AG04450 (cell line): ENCODE measurements at regions of chr6 and their contacts with region 1.

Region 1: DNA sequence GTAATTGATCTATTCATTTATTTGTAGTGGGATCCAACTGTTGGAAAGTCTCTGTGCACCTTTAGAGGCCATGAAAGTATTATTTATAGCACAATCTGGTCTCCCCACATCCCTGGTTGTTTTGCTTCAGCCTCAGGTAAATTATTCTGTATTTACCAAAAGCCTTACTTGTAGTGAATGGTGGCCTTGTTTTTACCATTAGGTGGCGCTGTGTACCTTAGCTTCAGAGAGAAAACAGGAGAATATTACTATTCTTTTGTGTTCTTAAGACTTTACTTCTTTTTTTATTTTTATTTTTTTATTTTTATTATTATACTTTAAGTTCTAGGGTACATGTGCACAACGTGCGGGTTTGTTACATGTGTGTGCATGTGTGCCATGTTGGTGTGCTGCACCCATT is 23.7 kb downstream of the PEX7 start:
- DNase-seq: peak; percentile 39
- H3K4me3 ChIP-seq: no peak overlapping the region
- H3K27ac ChIP-seq: no peak overlapping the region
- H3K27me3 ChIP-seq: no peaks in the 10 kb centered on the region
- CTCF ChIP-seq: peak; percentile 81

Region 2: GRCh38 chr6:136859430-136859829 is 13.4 kb after region 1 on chr6:
- CTCF ChIA-PET with region 1: interaction called, 13 read pairs
- POLR2A ChIA-PET with region 1: no interaction called
- DNase-seq: no peak
- H3K4me3 ChIP-seq: no peak overlapping the region
- H3K27ac ChIP-seq: no peak overlapping the region
- H3K27me3 ChIP-seq: no peaks in the 10 kb centered on the region
- CTCF ChIP-seq: no peak

Region 3: DNA sequence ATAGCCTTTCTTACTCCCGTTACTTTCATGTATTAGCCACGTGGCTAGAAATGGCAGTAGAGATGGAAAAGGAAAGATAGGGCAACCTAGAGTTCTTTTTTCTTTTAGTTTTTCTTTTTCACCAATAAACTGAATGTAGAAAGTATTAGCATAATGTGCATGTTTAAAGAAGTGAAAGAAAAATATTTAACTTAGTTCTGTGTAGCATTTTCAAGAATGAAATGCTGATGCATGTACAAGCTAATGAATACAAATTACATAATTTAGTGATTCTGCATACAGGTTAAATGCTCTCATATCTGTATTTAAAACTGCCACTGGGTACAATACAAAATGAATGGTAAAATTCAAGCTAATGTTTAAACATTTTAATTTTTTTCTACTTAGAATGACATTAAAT is 221.4 kb after region 1 on chr6:
- CTCF ChIA-PET with region 1: no interaction called
- POLR2A ChIA-PET with region 1: no interaction called
- DNase-seq: no peak
- H3K4me3 ChIP-seq: no peak overlapping the region
- H3K27ac ChIP-seq: no peak overlapping the region
- H3K27me3 ChIP-seq: peaks cover 2% of the 10 kb centered on the region
- CTCF ChIP-seq: no peak